ENCODE measurements at regions of chr3 and their contacts with region 1.

Region 1: GRCh38 chr3:12135029-12135657 is 23.6 kb downstream of the TIMP4 start:
- DNase-seq: peak; percentile 34 to 53 (median 41)
- H3K4me3 ChIP-seq: no peak overlapping the region
- H3K4me3 Mint-ChIP-seq: no peak overlapping the region
- H3K27ac ChIP-seq: no peak overlapping the region
- H3K27ac Mint-ChIP-seq: no peak overlapping the region
- H3K4me1 ChIP-seq: no peaks in the 10 kb centered on the region
- H3K4me1 Mint-ChIP-seq: no peaks in the 10 kb centered on the region
- H3K27me3 ChIP-seq: no peaks in the 10 kb centered on the region
- H3K27me3 Mint-ChIP-seq: peaks cover 0 to 18% of the 10 kb centered on the region in 2 donors

Region 2: GRCh38 chr3:12158387-12159226 is 23.5 kb after region 1 on chr3 and contains the start of gene TIMP4:
- CTCF ChIA-PET with region 1: no interaction called
- POLR2A ChIA-PET with region 1: no interaction called
- DNase-seq: no peak
- H3K4me3 ChIP-seq: no peak within 1 kb of the TSS
- H3K4me3 Mint-ChIP-seq: no peak within 1 kb of the TSS
- H3K27ac ChIP-seq: no peak within 1 kb of the TSS
- H3K27ac Mint-ChIP-seq: no peak within 1 kb of the TSS
- H3K4me1 ChIP-seq: no peaks in the 10 kb centered on the region
- H3K4me1 Mint-ChIP-seq: no peaks in the 10 kb centered on the region
- H3K27me3 ChIP-seq: no peaks in the 10 kb centered on the region
- H3K27me3 Mint-ChIP-seq: peaks cover 14 to 38% of the 10 kb centered on the region in 2 donors
- total RNA-seq, gene TIMP4: not detected

Region 3: GRCh38 chr3:12479919-12480425 is 344.8 kb after region 1 on chr3:
- CTCF ChIA-PET with region 1: interaction called, 28 read pairs
- POLR2A ChIA-PET with region 1: no interaction called
- DNase-seq: peak in 2 of 5 donors; percentile 40 to 41
- H3K4me3 ChIP-seq: no peak overlapping the region
- H3K4me3 Mint-ChIP-seq: peak overlapping the region in 1 of 7 donors; percentile 12
- H3K27ac ChIP-seq: no peak overlapping the region
- H3K27ac Mint-ChIP-seq: no peak overlapping the region
- H3K4me1 ChIP-seq: peaks cover 15% of the 10 kb centered on the region
- H3K4me1 Mint-ChIP-seq: peaks cover 23 to 25% (median 23%) of the 10 kb centered on the region in 3 donors
- H3K27me3 ChIP-seq: no peaks in the 10 kb centered on the region
- H3K27me3 Mint-ChIP-seq: no peaks in the 10 kb centered on the region

Measured in CD8-positive, alpha-beta memory T cell (primary cell).